GM12878 (cell line): ENCODE measurements at regions of chr13 and their contacts with region 1.

Region 1: GRCh38 chr13:102800145-102801041 is 1.5 kb downstream of the BIVM start:
- DNase-seq: no peak
- ATAC-seq: peak; percentile 87
- H3K4me3 ChIP-seq: peak overlapping the region; percentile 77
- H3K27ac ChIP-seq: peak overlapping the region; percentile 72
- H3K4me1 ChIP-seq: peaks cover 5% of the 10 kb centered on the region; the same call in 1 of the 2 replicates
- H3K27me3 ChIP-seq: no peaks in the 10 kb centered on the region
- CTCF ChIP-seq: peak; percentile 76 to 91 (median 83)
- EP300 ChIP-seq: no peak
- POLR2A ChIP-seq: peak; percentile 85
- RAD21 ChIP-seq: peak; percentile 61

Region 2: DNA sequence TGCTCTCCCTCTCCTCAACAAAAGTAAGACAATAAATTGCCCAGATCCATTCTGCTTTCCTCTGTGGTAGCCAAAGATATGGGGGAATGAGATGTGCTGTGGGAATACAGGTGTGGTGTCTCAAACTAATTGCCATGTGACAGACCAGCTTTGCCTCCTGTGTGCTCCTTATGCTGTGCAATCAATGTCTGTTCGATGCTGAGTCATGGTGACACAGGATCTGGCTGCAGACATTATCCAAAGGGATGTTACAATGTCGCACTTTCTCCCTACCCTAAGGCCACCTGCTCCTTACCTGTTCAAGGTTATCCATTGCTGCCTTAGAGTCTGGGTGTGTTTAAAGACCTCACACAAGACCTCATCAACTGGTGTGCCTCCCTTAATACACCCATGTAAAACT is 431.1 kb before region 1 on chr13:
- CTCF ChIA-PET with region 1: no interaction called
- POLR2A ChIA-PET with region 1: no interaction called
- RAD21 ChIA-PET with region 1: no interaction called
- SMC1A ChIA-PET with region 1: no interaction called
- in situ Hi-C with region 1: no loop called
- intact Hi-C with region 1: no loop called
- DNase-seq: no peak
- ATAC-seq: no peak
- H3K4me3 ChIP-seq: no peak overlapping the region
- H3K27ac ChIP-seq: no peak overlapping the region
- H3K4me1 ChIP-seq: no peaks in the 10 kb centered on the region
- H3K27me3 ChIP-seq: no peaks in the 10 kb centered on the region; a peak in 1 of 4 replicates
- CTCF ChIP-seq: no peak
- EP300 ChIP-seq: no peak
- POLR2A ChIP-seq: no peak
- RAD21 ChIP-seq: no peak

Region 3: DNA sequence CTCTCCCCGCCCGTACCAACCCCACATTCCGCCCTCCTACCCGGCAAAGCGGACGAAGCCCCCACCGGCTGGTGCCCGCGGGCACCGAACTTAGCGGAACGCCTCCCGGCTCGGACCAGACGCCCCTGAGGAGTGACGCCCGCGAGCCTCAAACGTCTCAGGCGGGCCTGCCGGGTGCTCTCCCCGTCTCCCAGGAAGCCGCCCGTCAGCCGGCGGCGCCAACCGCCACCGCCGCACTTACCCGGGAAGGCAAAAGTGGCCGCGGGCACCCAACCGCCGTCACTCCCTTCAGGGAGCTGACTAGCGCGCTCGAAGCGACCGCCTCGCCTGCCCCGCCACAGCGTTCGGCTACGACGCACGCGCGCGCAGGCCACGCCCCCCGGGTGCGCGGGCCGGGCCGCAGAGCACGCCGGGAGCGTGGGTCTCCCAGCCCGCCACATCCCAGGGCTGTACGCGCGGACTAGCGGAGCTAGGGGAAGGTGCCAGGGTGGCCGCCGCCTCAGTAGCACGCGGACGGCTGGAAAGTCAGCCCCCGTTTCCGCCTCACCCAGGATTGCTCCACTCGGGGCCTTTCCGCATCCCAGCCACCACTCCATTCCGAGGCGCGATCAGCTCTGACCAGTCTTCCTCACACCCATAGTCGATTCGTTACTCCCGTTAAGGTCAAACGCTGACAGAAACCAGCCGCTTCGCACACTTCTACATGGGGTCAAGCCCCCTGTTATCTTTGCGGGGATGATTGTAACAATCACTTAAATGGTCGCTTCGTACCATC is 26.8 kb before region 1 on chr13 and contains the start of gene TEX30:
- CTCF ChIA-PET with region 1: interaction called, 6 read pairs
- POLR2A ChIA-PET with region 1: interaction called, 16 read pairs
- RAD21 ChIA-PET with region 1: no interaction called
- SMC1A ChIA-PET with region 1: interaction called, 22 read pairs
- in situ Hi-C with region 1: no loop called
- intact Hi-C with region 1: loop called (anchors 1 kb)
- DNase-seq: peak; percentile 38
- ATAC-seq: peak; percentile 95
- H3K4me3 ChIP-seq: peak within 1 kb of the TSS; percentile 89
- H3K27ac ChIP-seq: peak within 1 kb of the TSS; percentile 73
- H3K4me1 ChIP-seq: peaks cover 11% of the 10 kb centered on the region
- H3K27me3 ChIP-seq: no peaks in the 10 kb centered on the region
- CTCF ChIP-seq: no peak
- EP300 ChIP-seq: no peak
- POLR2A ChIP-seq: peak; percentile 99
- RAD21 ChIP-seq: no peak
- polyA plus RNA-seq, gene TEX30: 79.5 to 114 TPM

Region 4: DNA sequence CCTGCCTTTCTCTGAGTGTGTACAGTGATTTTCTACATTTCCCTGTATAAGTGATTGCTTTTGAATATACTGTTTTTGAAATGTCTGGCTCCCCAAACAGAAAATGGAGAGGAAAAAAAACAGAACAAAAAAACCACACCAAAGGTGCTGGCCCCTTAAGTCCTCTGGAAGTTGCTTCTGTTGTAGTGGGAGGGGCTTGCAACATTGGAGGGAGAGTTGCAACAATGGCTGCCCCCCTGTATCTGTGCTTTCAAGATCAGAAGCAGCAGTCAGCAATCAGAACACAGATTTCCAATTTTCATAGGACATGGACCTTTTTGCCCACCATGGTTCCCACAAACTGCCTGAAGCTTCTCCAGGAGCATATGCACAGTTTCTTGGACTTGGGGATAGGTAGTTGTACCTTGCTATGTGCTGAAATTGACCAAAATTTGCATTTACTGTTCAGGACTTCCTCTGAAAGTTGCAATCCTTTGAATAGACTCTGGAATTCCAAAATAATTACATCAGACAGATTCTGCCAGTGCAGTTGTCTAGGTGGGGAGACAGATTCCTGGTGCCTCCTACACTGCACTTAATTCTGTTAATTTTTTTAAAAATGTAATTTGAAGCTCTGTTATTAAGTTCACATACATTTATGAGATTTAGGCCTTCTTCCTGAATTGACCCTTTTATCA is 12.4 kb after region 1 on chr13:
- CTCF ChIA-PET with region 1: interaction called, 18 read pairs
- POLR2A ChIA-PET with region 1: interaction called, 8 read pairs
- RAD21 ChIA-PET with region 1: interaction called, 6 read pairs
- SMC1A ChIA-PET with region 1: interaction called, 7 read pairs
- in situ Hi-C with region 1: no loop called
- intact Hi-C with region 1: no loop called
- DNase-seq: no peak
- ATAC-seq: peak; percentile 79
- H3K4me3 ChIP-seq: no peak overlapping the region
- H3K27ac ChIP-seq: peak overlapping the region; percentile 46; the same call in 1 of the 2 replicates
- H3K4me1 ChIP-seq: peaks cover 15% of the 10 kb centered on the region
- H3K27me3 ChIP-seq: no peaks in the 10 kb centered on the region
- CTCF ChIP-seq: no peak
- EP300 ChIP-seq: no peak
- POLR2A ChIP-seq: no peak
- RAD21 ChIP-seq: no peak